ENCODE measurements at regions of chr2 and their contacts with region 1.

Region 1: DNA sequence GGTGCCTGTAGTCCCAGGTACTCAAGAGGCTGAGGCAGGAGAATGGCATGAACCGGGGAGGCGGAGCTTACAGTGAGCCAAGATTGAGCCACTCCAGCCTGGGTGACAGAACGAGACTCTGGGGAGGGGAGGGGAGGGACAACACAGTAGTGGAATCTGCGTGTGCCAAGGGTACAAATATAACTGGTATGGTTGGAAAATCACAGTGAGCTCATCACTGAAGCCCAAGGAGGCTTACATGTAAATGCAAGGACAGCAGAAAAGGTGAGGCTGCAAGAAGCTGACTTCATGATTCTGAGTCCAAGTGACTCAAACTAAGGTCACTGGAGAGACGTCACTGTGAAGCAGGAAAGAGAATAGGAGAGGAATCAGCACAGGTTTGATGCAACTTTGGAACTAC is 9.2 kb downstream of the SEPTIN10 start:
- DNase-seq: no peak
- ATAC-seq: peak in 3 of 4 donors; percentile 38 to 61 (median 44)
- H3K4me3 ChIP-seq: no peak overlapping the region
- H3K27ac ChIP-seq: no peak overlapping the region
- H3K4me1 ChIP-seq: peaks cover 0 to 8% (median 0%) of the 10 kb centered on the region in 4 donors
- H3K27me3 ChIP-seq: no peaks in the 10 kb centered on the region
- CTCF ChIP-seq: no peak
- POLR2A ChIP-seq: no peak

Region 2: DNA sequence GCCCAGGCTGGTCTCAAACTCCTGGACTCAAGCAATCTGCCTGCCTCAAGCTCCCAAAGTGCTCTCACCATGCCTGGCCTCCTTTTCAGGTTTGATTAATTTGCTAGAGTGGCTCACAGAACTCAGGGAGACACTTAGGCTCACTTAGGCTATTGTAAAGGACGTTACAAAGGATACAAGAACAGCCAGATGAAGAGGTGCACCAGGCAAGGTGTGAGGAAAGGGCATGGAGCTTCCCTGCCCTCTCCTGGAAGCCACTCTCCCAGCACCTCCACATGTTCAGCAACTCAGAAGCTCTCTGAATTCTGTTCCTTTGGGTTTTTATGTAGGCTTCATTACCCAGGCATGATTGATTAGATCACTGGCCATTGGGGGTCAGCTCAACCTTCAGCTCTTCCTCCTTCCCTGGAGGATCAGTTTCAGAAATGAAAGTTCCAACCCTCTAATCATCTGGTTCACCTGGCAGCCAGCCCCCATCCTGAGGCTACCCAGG is 110.8 kb after region 1 on chr2:
- intact Hi-C with region 1: loop called in 1 of 2 experiments (anchors 10 kb)
- DNase-seq: peak; percentile 43 to 67 (median 62)
- ATAC-seq: peak; percentile 97 to 99 (median 99)
- H3K4me3 ChIP-seq: no peak overlapping the region
- H3K27ac ChIP-seq: no peak overlapping the region
- H3K4me1 ChIP-seq: no peaks in the 10 kb centered on the region
- H3K27me3 ChIP-seq: no peaks in the 10 kb centered on the region
- CTCF ChIP-seq: peak; percentile 72 to 78 (median 76)
- POLR2A ChIP-seq: no peak